ENCODE measurements at regions of chr6 and their contacts with region 1.

Region 1: GRCh38 chr6:15245361-15246216 is at the start of gene JARID2:
- DNase-seq: peak; percentile 98
- H3K4me3 Mint-ChIP-seq: peak within 1 kb of the TSS; percentile 100
- H3K27ac Mint-ChIP-seq: peak within 1 kb of the TSS; percentile 93
- H3K4me1 Mint-ChIP-seq: peaks cover 23% of the 10 kb centered on the region
- H3K27me3 Mint-ChIP-seq: no peaks in the 10 kb centered on the region
- total RNA-seq, gene JARID2: 26.6 to 27.7 TPM

Region 2: GRCh38 chr6:14210663-14211561 is 1034.7 kb before region 1 on chr6:
- CTCF ChIA-PET with region 1: no interaction called
- intact Hi-C with region 1: loop called (anchors 1 kb)
- DNase-seq: peak; percentile 88
- H3K4me3 Mint-ChIP-seq: peak overlapping the region; percentile 79
- H3K27ac Mint-ChIP-seq: peak overlapping the region; percentile 71
- H3K4me1 Mint-ChIP-seq: peaks cover 12% of the 10 kb centered on the region
- H3K27me3 Mint-ChIP-seq: no peaks in the 10 kb centered on the region

Region 3: GRCh38 chr6:14660806-14661579 is 584.6 kb before region 1 on chr6:
- CTCF ChIA-PET with region 1: no interaction called
- intact Hi-C with region 1: loop called (anchors 5 kb)
- DNase-seq: peak; percentile 71
- H3K4me3 Mint-ChIP-seq: no peak overlapping the region
- H3K27ac Mint-ChIP-seq: no peak overlapping the region
- H3K4me1 Mint-ChIP-seq: peaks cover 44% of the 10 kb centered on the region
- H3K27me3 Mint-ChIP-seq: no peaks in the 10 kb centered on the region

Region 4: GRCh38 chr6:15184441-15184861 is 61.1 kb before region 1 on chr6:
- CTCF ChIA-PET with region 1: no interaction called
- intact Hi-C with region 1: loop called (anchors 1 kb)
- DNase-seq: peak; percentile 78
- H3K4me3 Mint-ChIP-seq: no peak overlapping the region
- H3K27ac Mint-ChIP-seq: peak overlapping the region; percentile 99
- H3K4me1 Mint-ChIP-seq: peaks cover 25% of the 10 kb centered on the region
- H3K27me3 Mint-ChIP-seq: no peaks in the 10 kb centered on the region

Region 5: GRCh38 chr6:15441215-15441868 is 195.8 kb after region 1 on chr6:
- CTCF ChIA-PET with region 1: interaction called, 3 read pairs
- intact Hi-C with region 1: loop called (anchors 2 kb)
- DNase-seq: peak; percentile 60
- H3K4me3 Mint-ChIP-seq: no peak overlapping the region
- H3K27ac Mint-ChIP-seq: no peak overlapping the region
- H3K4me1 Mint-ChIP-seq: peaks cover 57% of the 10 kb centered on the region
- H3K27me3 Mint-ChIP-seq: no peaks in the 10 kb centered on the region

Region 6: GRCh38 chr6:15662326-15663129 is 416.9 kb after region 1 on chr6 and contains the start of gene DTNBP1:
- CTCF ChIA-PET with region 1: no interaction called
- intact Hi-C with region 1: loop called (anchors 5 kb)
- DNase-seq: peak; percentile 85
- H3K4me3 Mint-ChIP-seq: peak within 1 kb of the TSS; percentile 80
- H3K27ac Mint-ChIP-seq: peak within 1 kb of the TSS; percentile 57
- H3K4me1 Mint-ChIP-seq: peaks cover 23% of the 10 kb centered on the region
- H3K27me3 Mint-ChIP-seq: no peaks in the 10 kb centered on the region
- total RNA-seq, gene DTNBP1: 14.6 to 16.3 TPM

Measured in activated naive CD4-positive, alpha-beta T cell treated with anti-CD3 and anti-CD28 coated beads for 36 hours (primary cell).